ENCODE measurements at regions of chr1 and their contacts with region 1.

Region 1: DNA sequence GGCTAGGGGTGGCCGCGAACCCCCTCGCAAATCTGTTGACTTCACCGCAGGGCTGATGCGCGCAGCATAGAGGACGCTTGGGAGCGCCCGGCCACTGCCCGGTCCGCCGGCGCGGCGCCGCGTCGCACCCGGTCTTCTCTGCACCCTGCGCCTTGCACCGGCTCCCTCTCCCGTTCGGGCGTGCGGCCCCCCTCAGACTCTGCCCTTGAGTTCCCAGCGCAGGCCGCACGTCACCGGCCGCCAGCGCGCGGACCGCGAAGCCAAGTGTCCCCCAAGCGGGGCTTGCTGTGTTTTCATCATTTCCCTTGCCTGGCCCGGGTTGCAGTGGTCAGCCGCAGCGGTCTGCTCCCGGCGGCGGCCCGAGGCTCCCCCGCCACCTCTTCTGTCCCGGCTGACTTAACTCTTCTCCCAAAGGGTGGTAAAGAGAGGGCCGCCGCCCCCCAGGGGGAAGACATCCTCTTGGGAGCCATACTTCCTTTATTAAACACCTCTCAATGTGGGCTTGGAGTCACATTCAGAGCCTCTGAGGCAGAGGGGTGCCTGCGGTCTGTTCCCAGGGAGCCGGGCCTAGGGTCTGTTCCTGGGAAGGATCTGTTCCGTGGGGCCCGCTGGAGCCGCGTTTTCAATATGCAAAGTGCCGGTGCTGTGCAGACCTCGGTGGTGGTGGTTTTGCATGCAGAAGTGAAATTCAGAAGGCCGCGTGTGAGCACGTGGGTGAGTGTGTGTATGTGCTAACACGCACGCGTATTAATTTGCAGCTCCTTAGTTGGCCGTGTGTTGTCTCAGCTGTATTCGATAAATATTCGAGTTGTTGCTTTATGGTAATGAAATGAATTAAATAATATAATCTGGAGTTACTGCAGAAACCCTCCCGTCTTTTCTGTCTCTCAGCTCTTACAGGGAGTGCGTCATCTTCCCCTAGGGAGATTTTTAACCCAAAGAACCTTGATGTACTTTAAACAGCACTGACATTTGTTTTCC is 17.6 kb downstream of the PBX1 start:
- DNase-seq: peak; percentile 88
- ATAC-seq: peak; percentile 80
- H3K4me3 ChIP-seq: peak overlapping the region; percentile 10
- H3K27ac ChIP-seq: peak overlapping the region; percentile 84
- H3K4me1 ChIP-seq: peaks cover 15% of the 10 kb centered on the region
- H3K27me3 ChIP-seq: no peaks in the 10 kb centered on the region
- CTCF ChIP-seq: no peak
- POLR2A ChIP-seq: no peak
- RAD21 ChIP-seq: 0 out of 2 replicates have a peak, but pooled peaks have one; percentile 8

Region 2: GRCh38 chr1:164433141-164433817 is 143.3 kb before region 1 on chr1:
- CTCF ChIA-PET with region 1: no interaction called
- POLR2A ChIA-PET with region 1: no interaction called
- dilution Hi-C with region 1: no loop called
- in situ Hi-C with region 1: no loop called
- intact Hi-C with region 1: no loop called
- DNase-seq: no peak
- ATAC-seq: no peak
- H3K4me3 ChIP-seq: no peak overlapping the region
- H3K27ac ChIP-seq: no peak overlapping the region
- H3K4me1 ChIP-seq: no peaks in the 10 kb centered on the region
- H3K27me3 ChIP-seq: no peaks in the 10 kb centered on the region
- CTCF ChIP-seq: no peak
- POLR2A ChIP-seq: no peak
- RAD21 ChIP-seq: no peak

Region 3: DNA sequence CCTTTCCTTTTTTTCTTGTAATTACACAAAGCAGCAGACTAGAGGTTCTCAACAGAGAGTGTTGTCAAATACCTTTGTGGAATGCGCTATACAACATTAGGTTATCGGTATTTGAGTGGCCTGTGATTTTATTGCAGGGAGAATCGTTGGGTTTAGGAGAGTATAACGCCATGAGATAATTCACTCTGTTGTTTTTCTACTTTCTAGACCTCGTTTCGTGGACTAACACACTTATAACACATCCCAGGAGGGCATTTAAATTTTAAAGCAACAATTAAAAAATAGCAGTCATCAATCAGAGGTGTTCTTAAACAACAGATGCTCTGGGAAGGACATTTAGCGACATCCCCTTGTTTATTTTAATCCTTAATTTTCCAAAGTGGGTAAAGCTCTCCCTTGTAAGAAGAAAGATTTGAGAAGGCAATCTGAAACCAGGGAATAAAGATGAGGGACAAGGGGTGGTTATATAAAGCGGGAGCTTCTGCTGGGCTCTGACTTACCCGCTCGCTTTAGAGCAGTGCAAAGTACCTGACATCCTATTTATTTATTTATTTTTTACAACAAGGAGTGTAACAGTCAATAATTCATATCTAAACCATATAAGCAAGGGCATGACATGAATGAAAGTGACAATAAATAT is 12.7 kb before region 1 on chr1:
- CTCF ChIA-PET with region 1: no interaction called
- POLR2A ChIA-PET with region 1: interaction called, 3 read pairs
- dilution Hi-C with region 1: no loop called
- in situ Hi-C with region 1: no loop called
- intact Hi-C with region 1: loop called (anchors 1 kb)
- DNase-seq: no peak
- ATAC-seq: no peak
- H3K4me3 ChIP-seq: peak overlapping the region; percentile 44
- H3K27ac ChIP-seq: peak overlapping the region; percentile 54; the same call in 1 of the 2 replicates
- H3K4me1 ChIP-seq: peaks cover 3% of the 10 kb centered on the region
- H3K27me3 ChIP-seq: no peaks in the 10 kb centered on the region
- CTCF ChIP-seq: no peak
- POLR2A ChIP-seq: no peak
- RAD21 ChIP-seq: no peak

Region 4: DNA sequence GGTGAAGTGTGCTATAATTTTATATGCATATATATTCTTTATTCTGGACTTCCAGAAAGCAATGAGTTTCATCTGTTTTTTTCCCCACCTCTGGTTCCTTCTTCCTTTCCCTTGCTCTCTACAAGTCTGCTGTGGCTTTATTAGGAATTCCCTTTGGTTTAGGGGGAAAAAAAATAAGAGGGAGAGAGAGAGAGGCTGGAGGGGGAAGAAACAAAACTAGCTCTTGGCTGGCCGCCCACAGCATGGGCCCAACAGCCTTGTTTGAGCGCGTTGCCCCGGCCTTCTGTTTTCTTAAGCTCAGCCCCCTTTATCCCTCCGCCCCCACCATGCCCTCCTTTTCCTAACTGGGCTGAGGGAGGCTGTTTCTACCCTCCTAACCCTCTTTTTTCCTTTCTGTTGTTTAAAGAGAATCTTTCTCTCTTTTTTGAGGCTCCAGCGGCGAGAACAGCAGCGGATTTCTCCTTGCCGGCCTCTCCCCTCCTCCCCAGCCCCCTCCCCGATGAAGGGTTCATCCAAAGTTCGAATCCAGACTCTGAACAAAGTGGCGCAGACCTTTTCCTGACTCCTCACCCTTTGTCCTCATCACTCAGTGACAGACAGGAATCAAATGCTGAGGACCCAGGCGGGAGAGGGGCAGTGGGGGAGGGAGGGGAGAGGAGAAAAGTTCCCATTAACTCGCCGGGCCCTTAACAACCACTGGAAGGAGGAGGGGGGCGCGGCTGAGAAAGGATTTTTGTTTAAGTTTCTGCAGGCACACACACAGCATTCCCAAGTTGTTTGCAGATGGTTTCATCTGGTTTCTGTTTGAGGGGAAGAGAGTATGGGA is 12.1 kb after region 1 on chr1:
- CTCF ChIA-PET with region 1: no interaction called
- POLR2A ChIA-PET with region 1: no interaction called
- dilution Hi-C with region 1: no loop called
- in situ Hi-C with region 1: no loop called
- intact Hi-C with region 1: loop called (anchors 1 kb)
- DNase-seq: peak; percentile 77
- ATAC-seq: peak; percentile 87
- H3K4me3 ChIP-seq: peak overlapping the region; percentile 21
- H3K27ac ChIP-seq: peak overlapping the region; percentile 98
- H3K4me1 ChIP-seq: peaks cover 24% of the 10 kb centered on the region
- H3K27me3 ChIP-seq: no peaks in the 10 kb centered on the region
- CTCF ChIP-seq: no peak
- POLR2A ChIP-seq: no peak
- RAD21 ChIP-seq: no peak

Region 5: GRCh38 chr1:164748253-164748899 is 171.8 kb after region 1 on chr1:
- CTCF ChIA-PET with region 1: no interaction called
- POLR2A ChIA-PET with region 1: no interaction called
- dilution Hi-C with region 1: no loop called
- in situ Hi-C with region 1: no loop called
- intact Hi-C with region 1: loop called (anchors 5 kb)
- DNase-seq: peak; percentile 99
- ATAC-seq: peak; percentile 75
- H3K4me3 ChIP-seq: no peak overlapping the region
- H3K27ac ChIP-seq: peak overlapping the region; percentile 94
- H3K4me1 ChIP-seq: peaks cover 13% of the 10 kb centered on the region
- H3K27me3 ChIP-seq: no peaks in the 10 kb centered on the region
- CTCF ChIP-seq: no peak
- POLR2A ChIP-seq: no peak
- RAD21 ChIP-seq: peak; percentile 37; the same call in 1 of the 2 replicates

Region 6: DNA sequence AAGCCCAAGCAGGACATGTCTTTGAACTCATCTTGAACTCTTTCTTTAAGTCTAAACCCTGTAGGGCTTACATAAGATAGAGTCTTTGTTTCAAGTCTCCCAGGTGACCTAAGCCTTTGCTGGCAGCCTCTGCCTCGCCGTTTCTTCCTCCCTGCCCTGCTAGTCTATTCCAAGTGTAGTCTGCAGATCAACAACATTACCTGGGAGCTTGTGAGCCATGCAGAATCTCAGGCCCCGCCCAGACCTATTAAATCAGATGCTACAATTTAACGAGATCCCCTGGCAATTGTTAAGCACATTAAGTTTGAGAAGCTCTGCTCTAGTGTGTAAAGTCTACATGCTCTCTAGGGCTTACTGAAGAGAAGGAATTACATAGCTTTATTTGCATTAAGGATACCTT is 254.0 kb after region 1 on chr1:
- CTCF ChIA-PET with region 1: no interaction called
- POLR2A ChIA-PET with region 1: interaction called, 13 read pairs
- dilution Hi-C with region 1: no loop called
- in situ Hi-C with region 1: no loop called
- intact Hi-C with region 1: no loop called
- DNase-seq: no peak
- ATAC-seq: no peak
- H3K4me3 ChIP-seq: no peak overlapping the region
- H3K27ac ChIP-seq: no peak overlapping the region
- H3K4me1 ChIP-seq: 0 out of 2 replicates have a peak, but pooled peaks cover 2% of the 10 kb centered on the region
- H3K27me3 ChIP-seq: no peaks in the 10 kb centered on the region
- CTCF ChIP-seq: no peak
- POLR2A ChIP-seq: no peak
- RAD21 ChIP-seq: no peak